AG04449 (cell line): ENCODE measurements at regions of chr1 and their contacts with region 1.

Region 1: GRCh38 chr1:117512743-117513321 is 93.0 kb upstream of the TENT5C start:
- DNase-seq: no peak
- H3K4me3 ChIP-seq: no peak overlapping the region
- CTCF ChIP-seq: peak; percentile 19

Region 2: GRCh38 chr1:117501281-117501680 is 11.6 kb before region 1 on chr1:
- CTCF ChIA-PET with region 1: interaction called, 18 read pairs
- POLR2A ChIA-PET with region 1: no interaction called
- DNase-seq: peak; percentile 41
- H3K4me3 ChIP-seq: no peak overlapping the region
- CTCF ChIP-seq: no peak

Region 3: GRCh38 chr1:117527566-117528102 is 14.8 kb after region 1 on chr1:
- CTCF ChIA-PET with region 1: interaction called, 40 read pairs
- POLR2A ChIA-PET with region 1: no interaction called
- DNase-seq: no peak
- H3K4me3 ChIP-seq: no peak overlapping the region
- CTCF ChIP-seq: no peak

Region 4: GRCh38 chr1:117929173-117929989 is 416.5 kb after region 1 on chr1 and contains the starts of genes GDAP2 and WDR3:
- CTCF ChIA-PET with region 1: interaction called, 11 read pairs
- POLR2A ChIA-PET with region 1: no interaction called
- DNase-seq: peak; percentile 76
- H3K4me3 ChIP-seq: peak within 1 kb of the TSS; percentile 98
- CTCF ChIP-seq: no peak